ENCODE measurements at regions of chr5 and their contacts with region 1.

Region 1: GRCh38 chr5:164475339-164475977 is 970.0 kb downstream of the MAT2B start:
- DNase-seq: no peak
- ATAC-seq: peak; percentile 54; the same call in 1 of the 3 replicates
- H3K4me3 ChIP-seq: no peak overlapping the region
- H3K27ac ChIP-seq: no peak overlapping the region
- H3K4me1 ChIP-seq: no peaks in the 10 kb centered on the region
- H3K27me3 ChIP-seq: no peaks in the 10 kb centered on the region
- CTCF ChIP-seq: peak; percentile 14 to 43 (median 20); a peak in 3 of 6 replicates
- EP300 ChIP-seq: no peak
- POLR2A ChIP-seq: no peak
- RAD21 ChIP-seq: peak; percentile 60

Region 2: DNA sequence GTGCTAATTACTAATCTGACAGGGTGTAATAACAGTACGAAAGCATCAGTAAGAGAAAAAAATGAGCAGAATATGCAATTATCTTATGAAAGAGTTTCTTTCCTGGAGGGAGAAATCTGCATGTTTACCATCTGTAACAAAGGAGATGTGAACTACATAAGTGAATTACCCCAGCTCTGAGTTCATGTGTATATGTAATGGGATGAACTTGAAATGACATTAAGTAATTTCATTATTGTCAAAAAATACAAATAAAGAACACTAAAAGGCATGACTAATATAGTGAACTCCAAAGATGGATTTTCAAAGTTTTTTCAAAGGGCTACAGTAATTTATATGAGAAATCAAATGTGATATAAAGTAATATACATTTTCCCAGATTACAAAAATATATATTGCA is 26.0 kb before region 1 on chr5:
- CTCF ChIA-PET with region 1: interaction called, 5 read pairs
- POLR2A ChIA-PET with region 1: no interaction called
- RAD21 ChIA-PET with region 1: interaction called, 3 read pairs
- SMC1A ChIA-PET with region 1: interaction called, 11 read pairs
- in situ Hi-C with region 1: no loop called
- intact Hi-C with region 1: no loop called
- DNase-seq: no peak
- ATAC-seq: no peak
- H3K4me3 ChIP-seq: no peak overlapping the region
- H3K27ac ChIP-seq: no peak overlapping the region
- H3K4me1 ChIP-seq: no peaks in the 10 kb centered on the region
- H3K27me3 ChIP-seq: no peaks in the 10 kb centered on the region
- CTCF ChIP-seq: no peak
- EP300 ChIP-seq: no peak
- POLR2A ChIP-seq: no peak
- RAD21 ChIP-seq: no peak

Region 3: DNA sequence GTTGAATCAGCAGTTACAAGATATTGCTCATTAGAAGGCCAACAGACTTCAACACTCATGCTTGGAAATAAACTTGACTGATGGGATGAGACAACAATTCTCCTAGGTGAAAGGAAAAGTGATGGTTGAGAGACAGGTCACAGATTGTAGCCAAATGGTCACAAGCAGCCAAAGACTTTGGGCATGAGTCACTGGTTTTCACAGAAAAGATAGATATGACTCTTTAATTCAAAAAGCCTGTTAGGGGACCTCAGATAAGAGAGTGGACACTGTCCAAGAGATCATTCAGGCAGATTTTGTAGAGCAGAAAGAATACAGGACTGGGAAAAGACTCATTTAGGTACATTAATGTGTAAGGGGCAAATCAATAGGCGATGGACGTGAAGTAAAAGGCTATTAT is 12.5 kb after region 1 on chr5:
- CTCF ChIA-PET with region 1: interaction called, 5 read pairs
- POLR2A ChIA-PET with region 1: interaction called, 3 read pairs
- RAD21 ChIA-PET with region 1: interaction called, 3 read pairs
- SMC1A ChIA-PET with region 1: interaction called, 12 read pairs
- in situ Hi-C with region 1: no loop called
- intact Hi-C with region 1: no loop called
- DNase-seq: no peak
- ATAC-seq: no peak
- H3K4me3 ChIP-seq: no peak overlapping the region
- H3K27ac ChIP-seq: no peak overlapping the region
- H3K4me1 ChIP-seq: no peaks in the 10 kb centered on the region
- H3K27me3 ChIP-seq: no peaks in the 10 kb centered on the region
- CTCF ChIP-seq: no peak
- EP300 ChIP-seq: no peak
- POLR2A ChIP-seq: no peak
- RAD21 ChIP-seq: no peak